ENCODE measurements at regions of chr22 and their contacts with region 1.

Region 1: DNA sequence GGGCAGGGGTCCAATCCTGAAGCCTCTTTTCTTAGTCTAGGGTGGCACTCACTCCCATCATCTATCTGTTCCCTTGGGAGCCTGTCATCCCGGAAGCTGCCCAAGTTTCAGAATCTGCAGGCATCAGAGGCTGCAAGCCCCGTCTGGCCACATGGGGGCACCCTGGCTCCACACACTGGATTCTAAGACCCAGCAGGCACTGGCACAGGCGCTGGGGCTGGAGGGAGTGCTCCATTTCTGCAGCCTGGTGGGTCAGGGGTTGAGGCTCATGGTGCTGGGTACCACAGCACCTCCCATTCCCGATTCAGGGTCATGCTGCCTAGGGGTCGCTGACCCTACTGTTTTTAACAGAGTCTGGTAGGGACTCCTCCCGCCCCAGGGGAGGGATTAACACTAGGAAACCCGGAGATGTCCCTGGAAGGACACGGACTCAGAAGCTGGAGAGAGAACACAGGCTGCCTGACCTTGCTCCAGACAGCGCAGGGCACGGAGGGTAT is 243.9 kb upstream of the SYN3 start:
- DNase-seq: peak in 1 of 2 donors; percentile 80
- H3K4me3 ChIP-seq: no peak overlapping the region
- H3K27ac ChIP-seq: no peak overlapping the region
- H3K4me1 ChIP-seq: no peaks in the 10 kb centered on the region
- H3K27me3 ChIP-seq: no peaks in the 10 kb centered on the region
- CTCF ChIP-seq: peak; percentile 77 to 97 (median 84)

Region 2: GRCh38 chr22:33332538-33332937 is 30.4 kb after region 1 on chr22:
- intact Hi-C with region 1: no loop called
- DNase-seq: no peak
- H3K4me3 ChIP-seq: no peak overlapping the region
- H3K27ac ChIP-seq: no peak overlapping the region
- H3K4me1 ChIP-seq: no peaks in the 10 kb centered on the region
- H3K27me3 ChIP-seq: no peaks in the 10 kb centered on the region
- CTCF ChIP-seq: no peak

Region 3: GRCh38 chr22:33579448-33580093 is 277.5 kb after region 1 on chr22:
- intact Hi-C with region 1: loop called (anchors 1 kb)
- DNase-seq: no peak
- H3K4me3 ChIP-seq: no peak overlapping the region
- H3K27ac ChIP-seq: no peak overlapping the region
- H3K4me1 ChIP-seq: no peaks in the 10 kb centered on the region
- H3K27me3 ChIP-seq: no peaks in the 10 kb centered on the region
- CTCF ChIP-seq: peak; percentile 47 to 81 (median 74)

Region 4: GRCh38 chr22:34105461-34106062 is 803.5 kb after region 1 on chr22:
- intact Hi-C with region 1: loop called (anchors 2 kb)
- DNase-seq: peak in 1 of 2 donors; percentile 65
- H3K4me3 ChIP-seq: no peak overlapping the region
- H3K27ac ChIP-seq: no peak overlapping the region
- H3K4me1 ChIP-seq: no peaks in the 10 kb centered on the region
- H3K27me3 ChIP-seq: no peaks in the 10 kb centered on the region
- CTCF ChIP-seq: peak in 2 of 3 experiments; percentile 50 to 65

Measured in ascending aorta (tissue), 2 donors.